ENCODE measurements at regions of chr7 and their contacts with region 1.

Region 1: DNA sequence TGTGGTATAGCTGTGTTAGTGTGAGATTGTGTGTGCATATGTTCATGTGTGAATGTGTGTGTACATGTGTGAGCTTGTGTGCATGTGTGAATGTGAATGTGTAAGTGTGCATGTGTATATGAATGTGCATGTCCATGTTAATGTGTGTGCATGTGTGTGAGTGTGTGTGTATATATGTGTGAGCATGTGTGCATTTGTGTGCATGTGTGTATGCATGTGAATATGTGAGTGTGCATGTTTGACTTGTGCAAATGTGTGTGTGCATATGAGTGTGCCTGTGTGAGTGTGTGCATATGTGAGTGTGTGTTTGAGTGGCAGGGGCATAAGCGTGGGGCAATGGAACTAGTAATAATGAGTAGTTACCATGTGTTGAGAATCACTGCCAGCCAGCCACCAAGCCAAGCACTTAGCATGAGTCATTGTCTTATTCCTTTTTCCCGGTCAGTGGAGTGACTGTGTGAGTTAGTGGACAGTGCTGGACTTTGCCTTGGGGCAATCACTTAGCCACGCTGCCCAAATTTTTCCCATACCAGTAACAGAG is 46.3 kb upstream of the SHH start:
- DNase-seq: peak; percentile 42
- H3K27ac ChIP-seq: no peak overlapping the region
- CTCF ChIP-seq: no peak

Region 2: GRCh38 chr7:155058896-155059295 is 799.7 kb before region 1 on chr7:
- CTCF ChIA-PET with region 1: no interaction called
- POLR2A ChIA-PET with region 1: no interaction called
- DNase-seq: no peak
- H3K27ac ChIP-seq: no peak overlapping the region
- CTCF ChIP-seq: no peak

Region 3: DNA sequence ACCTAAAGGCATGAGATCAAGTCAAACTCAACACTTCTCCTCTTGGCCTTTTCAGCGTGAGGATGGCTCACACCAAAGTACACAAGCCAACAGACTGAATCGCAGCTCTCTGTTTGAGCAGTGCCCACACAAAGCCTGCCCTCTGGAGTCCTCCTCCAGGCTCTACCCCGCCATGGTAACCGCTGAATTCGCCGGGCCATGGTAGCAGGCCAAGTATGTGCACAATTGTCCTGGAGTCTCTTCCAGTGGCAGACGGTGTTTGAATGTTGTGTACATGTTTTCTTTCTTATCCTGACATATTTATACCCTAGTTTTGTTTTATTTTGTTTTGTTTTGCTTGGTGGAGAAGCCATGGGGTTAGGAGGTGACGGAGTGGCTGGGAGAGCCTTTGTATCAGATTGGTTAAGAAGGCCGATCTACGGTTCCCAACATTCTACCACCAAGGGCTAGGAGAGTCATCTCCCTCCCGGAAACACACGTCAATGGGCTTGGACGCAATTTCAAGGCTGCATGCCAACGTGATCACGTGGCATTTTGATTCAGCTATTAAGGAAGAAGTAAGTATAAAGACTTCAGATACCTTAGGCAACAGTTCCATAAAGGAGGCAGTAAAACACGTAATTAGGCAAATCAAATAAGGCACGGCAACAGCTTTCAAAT is 34.2 kb before region 1 on chr7:
- CTCF ChIA-PET with region 1: no interaction called
- POLR2A ChIA-PET with region 1: interaction called, 14 read pairs
- DNase-seq: peak; percentile 60
- H3K27ac ChIP-seq: no peak overlapping the region
- CTCF ChIP-seq: no peak

Region 4: GRCh38 chr7:155928583-155928982 is 70.0 kb after region 1 on chr7:
- CTCF ChIA-PET with region 1: no interaction called
- POLR2A ChIA-PET with region 1: no interaction called
- DNase-seq: no peak
- H3K27ac ChIP-seq: no peak overlapping the region
- CTCF ChIP-seq: no peak

Region 5: GRCh38 chr7:155947051-155947450 is 88.5 kb after region 1 on chr7:
- CTCF ChIA-PET with region 1: no interaction called
- POLR2A ChIA-PET with region 1: no interaction called
- DNase-seq: no peak
- H3K27ac ChIP-seq: no peak overlapping the region
- CTCF ChIP-seq: no peak